T-cell (primary cell): ENCODE measurements at regions of chr7 and their contacts with region 1.

Region 1: GRCh38 chr7:30446266-30446780 is 32.3 kb downstream of the NOD1 start:
- DNase-seq: no peak
- ATAC-seq: peak in 1 of 4 experiments; percentile 30
- H3K4me3 ChIP-seq: no peak overlapping the region
- H3K4me3 Mint-ChIP-seq: no peak overlapping the region
- H3K27ac ChIP-seq: no peak overlapping the region
- H3K27ac Mint-ChIP-seq: peak overlapping the region; percentile 19 to 84
- H3K4me1 ChIP-seq: peaks cover 0 to 4% of the 10 kb centered on the region in 2 experiments
- H3K4me1 Mint-ChIP-seq: peaks cover 0 to 11% (median 6%) of the 10 kb centered on the region in 3 donors
- H3K27me3 ChIP-seq: no peaks in the 10 kb centered on the region
- H3K27me3 Mint-ChIP-seq: no peaks in the 10 kb centered on the region

Region 2: DNA sequence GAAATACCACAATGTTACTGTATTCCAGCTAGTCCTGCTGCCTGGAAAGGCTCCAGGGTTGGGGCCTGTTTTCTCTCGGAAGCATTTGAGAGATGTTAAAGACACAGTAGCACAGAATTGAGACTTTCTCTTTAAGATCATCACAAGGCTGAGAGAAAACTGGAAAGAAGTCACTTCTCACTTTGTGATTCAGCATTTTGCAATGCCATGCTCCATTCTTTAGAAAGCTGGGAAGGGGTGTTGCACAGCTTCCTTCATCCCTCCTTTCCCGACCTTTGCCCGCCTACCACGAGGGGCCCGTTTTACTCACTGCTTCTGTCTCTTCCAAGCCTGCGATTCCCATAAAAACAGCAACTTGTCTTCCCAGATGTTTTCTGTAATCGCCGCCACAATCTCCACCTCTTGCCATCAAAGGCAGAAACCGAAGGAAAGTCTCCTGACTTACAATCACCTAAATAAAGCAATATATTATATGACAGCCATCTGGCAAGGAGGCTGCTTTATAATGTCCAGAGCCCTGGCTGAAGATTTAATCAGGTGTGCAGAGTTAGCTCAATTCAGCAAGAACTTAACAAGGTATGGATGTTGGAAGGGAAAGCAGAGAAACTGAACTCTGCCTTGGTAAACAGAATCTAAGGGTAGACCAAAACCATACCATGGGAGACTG is 13.4 kb after region 1 on chr7:
- CTCF ChIA-PET with region 1: no interaction called
- POLR2A ChIA-PET with region 1: no interaction called
- DNase-seq: no peak
- ATAC-seq: no peak
- H3K4me3 ChIP-seq: no peak overlapping the region
- H3K4me3 Mint-ChIP-seq: no peak overlapping the region
- H3K27ac ChIP-seq: no peak overlapping the region
- H3K27ac Mint-ChIP-seq: no peak overlapping the region
- H3K4me1 ChIP-seq: no peaks in the 10 kb centered on the region
- H3K4me1 Mint-ChIP-seq: peaks cover 4 to 13% (median 12%) of the 10 kb centered on the region in 3 donors
- H3K27me3 ChIP-seq: no peaks in the 10 kb centered on the region
- H3K27me3 Mint-ChIP-seq: no peaks in the 10 kb centered on the region

Region 3: DNA sequence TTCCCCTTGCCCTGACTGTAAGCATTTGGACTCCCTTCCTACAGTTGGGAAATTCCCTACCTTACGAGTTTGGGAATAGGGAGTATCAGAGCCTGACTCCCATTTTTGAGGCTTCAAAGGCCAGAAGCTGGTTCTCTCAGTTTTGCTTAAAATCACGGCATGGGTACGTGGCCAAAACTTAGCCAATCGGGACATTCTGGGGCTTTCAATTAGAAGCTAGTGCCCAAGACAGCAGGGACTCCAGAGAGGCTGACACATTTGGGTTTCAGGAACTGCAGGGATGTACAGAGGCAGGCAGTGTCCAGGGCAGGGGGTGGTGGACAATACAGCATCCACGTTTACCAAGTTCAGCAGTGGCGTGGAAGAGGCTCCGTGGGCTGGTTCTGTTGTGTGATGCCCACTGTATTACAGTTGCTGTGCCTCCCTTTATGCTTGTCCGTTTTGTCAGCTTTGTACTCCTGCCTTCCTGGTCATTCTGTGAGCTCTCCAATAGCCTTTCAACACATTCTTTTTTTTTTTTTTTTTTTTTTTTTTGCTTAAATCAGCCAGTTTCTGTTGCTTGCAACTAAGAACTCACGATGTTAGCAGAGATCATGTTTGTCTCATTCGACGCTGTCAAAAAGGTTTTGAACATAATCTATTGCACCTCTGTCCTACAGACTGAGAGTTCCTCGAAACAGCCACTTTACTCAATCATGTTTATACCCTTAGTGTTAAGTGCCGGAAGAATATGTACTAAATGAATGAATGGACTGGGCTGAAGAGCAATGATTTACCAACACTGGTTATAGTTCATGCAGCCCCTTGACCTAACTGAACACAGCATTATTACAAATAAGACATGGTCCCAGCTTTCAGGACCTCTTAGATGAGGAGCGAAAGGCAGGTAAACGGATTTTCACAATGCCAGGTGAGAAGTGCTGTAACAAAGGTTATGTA is 57.2 kb after region 1 on chr7:
- CTCF ChIA-PET with region 1: no interaction called
- POLR2A ChIA-PET with region 1: interaction called in 1 of 2 experiments, 12 read pairs
- DNase-seq: peak in 1 of 35 experiments; percentile 5
- ATAC-seq: no peak
- H3K4me3 ChIP-seq: peak overlapping the region; percentile 86 to 92
- H3K4me3 Mint-ChIP-seq: peak overlapping the region; percentile 85 to 90 (median 89)
- H3K27ac ChIP-seq: no peak overlapping the region
- H3K27ac Mint-ChIP-seq: peak overlapping the region; percentile 13 to 60
- H3K4me1 ChIP-seq: peaks cover 11 to 18% of the 10 kb centered on the region in 2 experiments
- H3K4me1 Mint-ChIP-seq: peaks cover 42 to 49% (median 46%) of the 10 kb centered on the region in 3 donors
- H3K27me3 ChIP-seq: no peaks in the 10 kb centered on the region
- H3K27me3 Mint-ChIP-seq: no peaks in the 10 kb centered on the region